ENCODE measurements at regions of chr15 and their contacts with region 1.

Region 1: GRCh38 chr15:91908391-91908790 is 54.9 kb downstream of the SLCO3A1 start:
- DNase-seq: no peak
- ATAC-seq: no peak
- H3K4me3 ChIP-seq: no peak overlapping the region
- H3K27ac ChIP-seq: no peak overlapping the region
- H3K4me1 ChIP-seq: peaks cover 0 to 47% (median 14%) of the 10 kb centered on the region in 12 donors
- H3K27me3 ChIP-seq: no peaks in the 10 kb centered on the region
- CTCF ChIP-seq: no peak
- POLR2A ChIP-seq: no peak

Region 2: GRCh38 chr15:91874992-91875660 is 33.3 kb before region 1 on chr15:
- intact Hi-C with region 1: loop called in 1 of 10 experiments (anchors 5 kb)
- DNase-seq: no peak
- ATAC-seq: peak in 2 of 4 donors; percentile 23 to 51
- H3K4me3 ChIP-seq: no peak overlapping the region
- H3K27ac ChIP-seq: no peak overlapping the region
- H3K4me1 ChIP-seq: peaks cover 0 to 40% (median 19%) of the 10 kb centered on the region in 12 donors
- H3K27me3 ChIP-seq: no peaks in the 10 kb centered on the region
- CTCF ChIP-seq: no peak
- POLR2A ChIP-seq: no peak

Region 3: DNA sequence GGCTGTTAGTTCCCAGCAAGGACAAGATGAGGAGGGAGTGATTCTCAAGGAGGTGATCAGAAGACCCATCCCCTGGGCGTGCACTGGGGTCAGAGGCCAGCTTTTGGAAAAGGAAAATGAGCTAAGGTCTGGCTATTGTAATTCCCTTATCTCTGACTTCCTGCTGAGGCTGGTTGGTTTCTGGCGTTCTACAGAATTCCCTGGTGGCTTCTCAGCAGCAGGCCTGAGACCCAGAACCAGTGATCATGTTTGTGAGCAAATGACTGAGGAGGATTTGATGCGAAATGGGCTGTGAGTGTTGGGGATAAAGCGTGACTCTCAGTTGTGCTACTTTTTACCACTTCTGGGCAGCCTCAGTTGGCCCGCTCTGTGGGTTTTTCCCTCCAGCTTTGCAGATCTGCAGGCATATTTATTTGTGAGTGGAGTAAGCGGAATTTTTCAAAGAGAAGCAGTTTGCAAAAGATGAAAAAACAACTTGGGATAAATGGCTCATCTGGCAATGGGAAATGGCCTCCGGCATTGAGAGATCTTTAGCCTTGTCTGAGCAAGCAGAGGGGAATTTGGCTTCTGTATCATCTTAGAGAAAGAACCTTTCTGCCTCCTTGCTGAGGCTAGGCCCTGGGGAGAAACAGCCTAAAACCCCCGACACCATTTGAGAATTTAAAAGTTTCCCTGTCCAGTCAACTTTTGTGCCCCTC is 47.8 kb after region 1 on chr15:
- intact Hi-C with region 1: no loop called
- DNase-seq: peak in 4 of 5 donors; percentile 40 to 63 (median 60)
- ATAC-seq: peak in 3 of 4 donors; percentile 73 to 81 (median 79)
- H3K4me3 ChIP-seq: no peak overlapping the region
- H3K27ac ChIP-seq: peak overlapping the region; percentile 7 to 78 (median 58)
- H3K4me1 ChIP-seq: peaks cover 0 to 56% (median 31%) of the 10 kb centered on the region in 12 donors
- H3K27me3 ChIP-seq: no peaks in the 10 kb centered on the region
- CTCF ChIP-seq: no peak
- POLR2A ChIP-seq: no peak